Activated CD8-positive, alpha-beta memory T cell treated with anti-CD3 and anti-CD28 coated beads, Interleukin-2, amount 10 ng/mL, durations not matched to agents 7 days and 5 days (primary cell): ENCODE measurements at regions of chr1 and their contacts with region 1.

Region 1: GRCh38 chr1:154992721-154993571 is 440 bp upstream of the LENEP start:
- DNase-seq: no peak
- ATAC-seq: no peak
- H3K4me3 Mint-ChIP-seq: no peak overlapping the region
- H3K27ac Mint-ChIP-seq: no peak overlapping the region
- H3K4me1 Mint-ChIP-seq: peaks cover 18% of the 10 kb centered on the region
- H3K27me3 Mint-ChIP-seq: no peaks in the 10 kb centered on the region

Region 2: DNA sequence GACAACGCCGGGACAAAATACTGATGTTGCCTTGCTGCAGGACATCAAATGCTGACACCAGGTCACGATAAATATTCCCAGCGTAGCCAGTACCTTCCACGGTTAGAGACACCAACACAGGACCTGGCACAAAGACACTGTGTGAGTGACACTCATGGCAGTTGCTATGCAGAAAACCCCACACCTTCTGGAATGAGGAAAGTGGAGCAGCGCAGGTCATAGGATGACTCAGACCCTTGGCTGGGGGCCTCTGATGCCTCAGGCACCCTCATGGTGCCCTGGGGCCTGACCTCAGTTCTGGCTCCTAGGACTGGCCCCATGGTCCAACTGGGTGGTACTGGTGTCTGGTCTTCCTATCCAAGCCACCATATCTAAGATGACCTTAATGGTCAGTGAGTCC is 33.6 kb after region 1 on chr1:
- CTCF ChIA-PET with region 1: no interaction called
- DNase-seq: no peak
- ATAC-seq: no peak
- H3K4me3 Mint-ChIP-seq: no peak overlapping the region
- H3K27ac Mint-ChIP-seq: no peak overlapping the region
- H3K4me1 Mint-ChIP-seq: peaks cover 2% of the 10 kb centered on the region
- H3K27me3 Mint-ChIP-seq: no peaks in the 10 kb centered on the region

Region 3: GRCh38 chr1:155063550-155064110 is 70.7 kb after region 1 on chr1 and contains the start of gene EFNA4:
- CTCF ChIA-PET with region 1: interaction called, 10 read pairs
- DNase-seq: peak; percentile 90
- ATAC-seq: peak; percentile 88
- H3K4me3 Mint-ChIP-seq: peak within 1 kb of the TSS; percentile 83
- H3K27ac Mint-ChIP-seq: peak within 1 kb of the TSS; percentile 8
- H3K4me1 Mint-ChIP-seq: peaks cover 26% of the 10 kb centered on the region
- H3K27me3 Mint-ChIP-seq: peaks cover 4% of the 10 kb centered on the region
- total RNA-seq, gene EFNA4: 3.8 to 5.3 TPM